ENCODE measurements at regions of chr1 and their contacts with region 1.

Region 1: DNA sequence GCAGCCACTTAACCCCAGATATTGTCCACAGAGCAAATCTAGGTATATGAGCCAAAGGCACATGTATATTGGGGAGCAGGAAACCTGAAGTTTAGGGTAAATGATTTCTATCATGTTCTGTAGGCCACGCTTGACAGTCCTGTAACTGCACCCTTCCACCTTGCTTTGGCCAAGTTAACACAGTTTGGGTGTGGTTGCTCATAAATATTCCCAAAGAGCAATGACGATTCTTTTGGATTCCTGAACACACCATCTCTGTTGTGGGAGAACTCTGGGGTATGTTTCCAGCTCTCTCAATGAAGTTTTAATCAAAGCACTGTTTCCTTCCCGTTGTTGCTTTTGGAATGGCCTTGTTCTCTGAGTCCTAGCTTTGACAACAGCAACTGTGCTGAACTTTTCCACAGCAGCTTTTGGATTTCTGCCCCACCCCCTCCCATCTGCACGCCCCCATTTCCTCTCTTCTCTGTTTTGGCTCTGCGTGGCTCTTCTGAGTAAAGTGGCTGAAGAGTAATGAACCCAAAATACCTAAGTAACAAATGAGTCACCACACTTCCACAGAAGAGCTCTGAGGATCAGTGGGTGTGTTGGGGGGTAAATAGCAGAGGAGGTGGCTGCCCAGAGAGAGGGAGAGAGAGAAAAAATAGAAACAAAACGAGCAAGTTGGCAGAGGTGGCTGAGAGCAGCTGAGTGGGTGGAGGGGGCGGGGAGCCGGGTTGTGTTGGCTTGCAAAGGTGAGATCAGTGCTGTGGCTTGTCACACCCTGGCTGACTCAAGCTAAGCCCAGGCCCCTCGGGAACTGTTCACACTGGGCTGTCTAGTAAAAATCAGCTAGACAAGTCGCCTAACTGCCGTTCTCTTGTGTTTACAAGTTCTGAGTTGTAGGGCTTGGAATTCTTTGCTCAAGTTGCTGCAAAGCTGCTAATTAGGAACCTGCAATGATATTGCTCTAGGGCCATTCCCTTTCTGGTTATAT is 26.9 kb upstream of the RAP1A start:
- DNase-seq: peak; percentile 98
- ATAC-seq: peak; percentile 92
- H3K4me3 ChIP-seq: peak overlapping the region; percentile 54
- H3K27ac ChIP-seq: peak overlapping the region; percentile 83
- H3K4me1 ChIP-seq: peaks cover 79% of the 10 kb centered on the region
- H3K27me3 ChIP-seq: no peaks in the 10 kb centered on the region
- CTCF ChIP-seq: no peak
- EP300 ChIP-seq: peak; percentile 78 to 93
- POLR2A ChIP-seq: peak; percentile 58; the same call in 1 of the 2 replicates
- RAD21 ChIP-seq: peak; percentile 39

Region 2: GRCh38 chr1:111516005-111516535 is 76.6 kb before region 1 on chr1:
- CTCF ChIA-PET with region 1: interaction called, 86 read pairs
- POLR2A ChIA-PET with region 1: interaction called, 7 read pairs
- RAD21 ChIA-PET with region 1: interaction called, 20 read pairs
- SMC1A ChIA-PET with region 1: interaction called, 93 read pairs
- in situ Hi-C with region 1: loop called (anchors 10 kb)
- intact Hi-C with region 1: no loop called
- DNase-seq: no peak
- ATAC-seq: peak; percentile 42
- H3K4me3 ChIP-seq: peak overlapping the region; percentile 45; the same call in 1 of the 2 replicates
- H3K27ac ChIP-seq: peak overlapping the region; percentile 33
- H3K4me1 ChIP-seq: peaks cover 36% of the 10 kb centered on the region
- H3K27me3 ChIP-seq: no peaks in the 10 kb centered on the region; a peak in 1 of 4 replicates
- CTCF ChIP-seq: peak; percentile 12 to 50 (median 34); a peak in 5 of 6 replicates
- EP300 ChIP-seq: no peak
- POLR2A ChIP-seq: no peak
- RAD21 ChIP-seq: no peak

Region 3: GRCh38 chr1:111577814-111578213 is 14.9 kb before region 1 on chr1:
- CTCF ChIA-PET with region 1: interaction called, 12 read pairs
- POLR2A ChIA-PET with region 1: no interaction called
- RAD21 ChIA-PET with region 1: interaction called, 12 read pairs
- SMC1A ChIA-PET with region 1: interaction called, 66 read pairs
- in situ Hi-C with region 1: no loop called
- intact Hi-C with region 1: no loop called
- DNase-seq: no peak
- ATAC-seq: no peak
- H3K4me3 ChIP-seq: no peak overlapping the region
- H3K27ac ChIP-seq: no peak overlapping the region
- H3K4me1 ChIP-seq: no peaks in the 10 kb centered on the region
- H3K27me3 ChIP-seq: no peaks in the 10 kb centered on the region
- CTCF ChIP-seq: no peak
- EP300 ChIP-seq: no peak
- POLR2A ChIP-seq: no peak
- RAD21 ChIP-seq: no peak

Region 4: DNA sequence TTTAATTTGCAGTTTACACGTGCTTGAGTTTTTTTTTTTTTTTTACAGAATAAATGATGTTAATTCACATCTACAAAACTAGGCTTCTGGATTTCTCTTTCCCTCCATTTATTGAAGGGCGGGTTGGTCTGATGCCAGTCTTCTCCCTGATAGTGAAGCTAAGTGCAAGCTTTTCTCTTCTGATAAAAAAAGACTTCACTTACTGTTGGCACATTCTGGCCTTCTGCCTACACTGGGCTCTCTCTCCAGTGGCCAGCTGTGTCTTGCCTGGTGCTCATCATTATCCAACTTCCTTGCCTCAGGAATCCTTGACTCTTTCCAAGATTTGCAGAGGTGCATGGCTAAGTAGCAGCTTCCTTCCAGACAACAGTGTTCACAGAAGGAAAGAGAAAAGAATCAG is 19.3 kb after region 1 on chr1:
- CTCF ChIA-PET with region 1: interaction called, 143 read pairs
- POLR2A ChIA-PET with region 1: interaction called, 242 read pairs
- RAD21 ChIA-PET with region 1: interaction called, 331 read pairs
- SMC1A ChIA-PET with region 1: interaction called, 446 read pairs
- in situ Hi-C with region 1: no loop called
- intact Hi-C with region 1: no loop called
- DNase-seq: no peak
- ATAC-seq: no peak
- H3K4me3 ChIP-seq: no peak overlapping the region
- H3K27ac ChIP-seq: no peak overlapping the region
- H3K4me1 ChIP-seq: peaks cover 13% of the 10 kb centered on the region
- H3K27me3 ChIP-seq: no peaks in the 10 kb centered on the region
- CTCF ChIP-seq: no peak
- EP300 ChIP-seq: no peak
- POLR2A ChIP-seq: no peak
- RAD21 ChIP-seq: no peak

Region 5: DNA sequence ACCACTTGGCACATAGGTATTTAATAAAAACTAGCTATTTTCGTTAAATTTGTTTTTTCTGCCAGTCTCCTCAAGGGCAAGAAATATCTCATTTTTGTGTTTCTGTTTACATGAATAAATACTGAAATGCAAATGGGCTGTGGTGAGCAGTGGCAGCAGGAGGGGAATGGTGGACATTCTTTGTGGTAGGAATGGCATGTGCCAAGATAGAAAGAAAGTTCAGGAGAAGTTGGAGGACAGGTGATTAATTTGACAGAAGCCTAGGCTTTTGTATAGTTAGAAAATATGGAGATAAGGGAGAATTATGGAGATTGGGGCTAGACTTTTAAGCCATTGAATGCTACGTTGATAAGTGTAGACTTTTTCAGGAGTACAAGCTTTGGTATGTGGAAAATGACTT is 35.5 kb after region 1 on chr1:
- CTCF ChIA-PET with region 1: interaction called, 143 read pairs
- POLR2A ChIA-PET with region 1: interaction called, 242 read pairs
- RAD21 ChIA-PET with region 1: interaction called, 331 read pairs
- SMC1A ChIA-PET with region 1: interaction called, 446 read pairs
- in situ Hi-C with region 1: no loop called
- intact Hi-C with region 1: loop called (anchors 5 kb)
- DNase-seq: no peak
- ATAC-seq: no peak
- H3K4me3 ChIP-seq: peak overlapping the region; percentile 36
- H3K27ac ChIP-seq: peak overlapping the region; percentile 53
- H3K4me1 ChIP-seq: peaks cover 26% of the 10 kb centered on the region; the same call in 1 of the 2 replicates
- H3K27me3 ChIP-seq: no peaks in the 10 kb centered on the region
- CTCF ChIP-seq: no peak
- EP300 ChIP-seq: no peak
- POLR2A ChIP-seq: no peak
- RAD21 ChIP-seq: no peak

Measured in GM12878 (cell line).